Right cardiac atrium (tissue), 5 donors: ENCODE measurements at regions of chr5 and their contacts with region 1.

Region 1: DNA sequence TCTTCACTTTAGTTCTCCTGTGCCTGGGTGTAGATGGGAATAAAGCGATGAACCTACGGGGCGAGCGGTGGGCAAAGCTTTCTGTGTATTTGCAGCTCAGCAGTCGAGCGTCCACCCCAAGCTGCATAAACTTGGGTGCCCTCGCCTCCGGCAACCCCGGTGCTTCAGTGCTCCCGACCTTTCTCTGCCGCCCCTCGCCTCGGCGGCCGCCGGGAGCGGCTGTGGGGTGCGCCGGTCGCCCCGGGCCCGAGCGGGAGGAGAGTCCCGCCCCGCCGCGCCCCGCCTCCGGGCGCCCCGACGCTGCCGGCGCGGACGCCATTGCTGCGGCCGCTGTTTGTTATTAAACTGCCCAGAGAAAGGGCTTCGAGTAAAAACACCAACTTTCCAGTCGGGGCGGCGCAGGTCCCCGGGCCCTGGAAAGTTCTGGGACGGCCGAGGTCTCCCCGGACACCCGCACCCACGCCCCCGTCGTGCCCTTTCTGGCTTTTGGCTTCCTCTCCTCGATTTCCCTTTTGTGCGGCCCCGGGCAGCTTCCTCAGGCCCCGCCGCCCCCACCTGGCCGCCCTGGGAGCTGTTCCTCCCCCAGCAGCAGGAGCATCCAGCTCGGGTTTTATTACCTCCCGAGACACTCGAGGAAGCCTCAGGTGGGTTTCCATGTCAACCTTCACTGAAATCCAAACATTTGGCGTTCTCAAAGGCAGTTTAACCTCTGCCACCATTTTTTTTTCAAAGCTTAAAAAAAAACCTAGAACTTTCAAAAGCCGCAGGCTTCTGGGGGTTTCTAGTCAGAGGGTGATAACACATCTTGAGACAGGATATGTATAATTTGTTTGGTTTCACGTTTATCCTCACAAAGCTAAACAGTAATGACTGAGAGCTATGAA is 334.3 kb downstream of the CWC27 start:
- DNase-seq: peak; percentile 55 to 87 (median 86)
- ATAC-seq: peak; percentile 92 to 94
- H3K4me3 ChIP-seq: peak overlapping the region; percentile 79
- H3K27ac ChIP-seq: peak overlapping the region; percentile 68
- H3K4me1 ChIP-seq: peaks cover 2% of the 10 kb centered on the region
- H3K27me3 ChIP-seq: no peaks in the 10 kb centered on the region

Region 2: GRCh38 chr5:64958757-64959391 is 144.2 kb before region 1 on chr5:
- intact Hi-C with region 1: loop called in 2 of 4 experiments (anchors 10 kb)
- DNase-seq: no peak
- ATAC-seq: no peak
- H3K4me3 ChIP-seq: no peak overlapping the region
- H3K27ac ChIP-seq: no peak overlapping the region
- H3K4me1 ChIP-seq: no peaks in the 10 kb centered on the region
- H3K27me3 ChIP-seq: no peaks in the 10 kb centered on the region

Region 3: DNA sequence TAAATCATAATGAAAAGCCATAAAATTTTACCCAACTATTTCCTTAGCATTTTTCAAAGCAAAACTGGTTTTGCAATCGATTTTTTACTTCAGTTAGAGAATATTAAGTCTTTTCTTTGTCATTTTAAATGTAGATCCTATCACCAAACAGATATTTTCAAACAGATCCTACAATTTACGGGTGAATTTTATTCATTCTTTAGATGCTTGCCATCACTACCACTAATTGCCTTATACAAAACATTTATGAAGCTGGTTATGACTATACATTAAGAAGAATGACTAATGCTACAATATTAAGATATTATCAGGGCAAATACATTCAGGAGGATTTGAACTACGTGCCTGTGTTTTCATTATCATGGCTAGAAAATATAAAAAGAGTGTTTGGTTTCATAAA is 137.5 kb before region 1 on chr5:
- intact Hi-C with region 1: loop called in 1 of 4 experiments (anchors 10 kb)
- DNase-seq: no peak
- ATAC-seq: no peak
- H3K4me3 ChIP-seq: no peak overlapping the region
- H3K27ac ChIP-seq: no peak overlapping the region
- H3K4me1 ChIP-seq: no peaks in the 10 kb centered on the region
- H3K27me3 ChIP-seq: no peaks in the 10 kb centered on the region

Region 4: DNA sequence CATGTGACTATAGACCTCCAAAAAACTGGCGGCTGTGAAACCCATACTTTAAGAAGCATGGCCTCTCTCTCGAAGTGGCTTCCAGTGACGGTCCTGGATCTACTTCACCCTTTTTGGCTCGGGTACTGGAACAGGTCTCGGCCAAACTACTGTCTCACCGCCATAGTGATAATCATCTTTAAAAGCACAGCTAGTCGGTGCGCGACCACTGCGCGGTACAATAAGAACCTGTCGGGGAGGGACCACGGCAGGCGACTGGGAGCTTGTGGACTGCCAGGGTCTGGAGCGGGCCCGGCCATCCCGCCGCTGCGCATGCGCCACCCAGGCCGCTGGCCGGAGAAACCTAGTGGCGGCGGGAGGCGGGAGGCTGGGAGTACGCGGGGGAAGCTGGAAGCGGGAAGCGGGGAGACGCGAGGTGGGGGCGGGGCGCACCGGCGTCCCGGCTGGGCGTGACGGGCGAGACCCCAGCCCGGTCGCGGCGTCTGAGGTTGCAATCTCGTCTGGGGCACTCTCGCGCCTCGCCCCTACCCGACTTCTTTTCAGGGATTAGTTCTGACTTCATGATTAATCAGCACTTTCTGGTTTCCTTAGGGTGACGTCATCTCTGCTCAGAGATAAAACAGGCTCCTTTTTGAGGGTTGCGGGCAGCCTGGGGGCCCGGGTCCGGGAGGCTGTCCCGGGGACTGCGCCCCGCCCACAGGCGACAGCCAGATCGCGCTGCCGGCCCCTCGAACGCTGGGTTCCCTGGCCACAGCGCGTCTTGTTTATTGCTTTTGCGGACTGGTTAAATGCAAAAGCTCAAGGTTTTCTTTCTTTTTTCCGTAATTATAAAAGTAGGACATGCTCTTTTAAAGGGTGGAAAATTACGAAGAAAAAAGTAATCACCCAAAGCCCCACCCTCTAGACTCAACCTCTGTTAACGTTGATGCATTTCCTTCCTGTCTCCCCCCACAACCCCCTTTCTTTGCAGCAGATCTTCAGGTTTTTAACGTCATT is 67.6 kb before region 1 on chr5:
- intact Hi-C with region 1: loop called in 1 of 4 experiments (anchors 10 kb)
- DNase-seq: peak; percentile 93 to 96 (median 96)
- ATAC-seq: peak; percentile 94 to 97
- H3K4me3 ChIP-seq: peak overlapping the region; percentile 63
- H3K27ac ChIP-seq: peak overlapping the region; percentile 94
- H3K4me1 ChIP-seq: peaks cover 9% of the 10 kb centered on the region
- H3K27me3 ChIP-seq: no peaks in the 10 kb centered on the region

Region 5: GRCh38 chr5:65086234-65086890 is 16.7 kb before region 1 on chr5:
- intact Hi-C with region 1: no loop called
- DNase-seq: no peak
- ATAC-seq: no peak
- H3K4me3 ChIP-seq: no peak overlapping the region
- H3K27ac ChIP-seq: no peak overlapping the region
- H3K4me1 ChIP-seq: no peaks in the 10 kb centered on the region
- H3K27me3 ChIP-seq: no peaks in the 10 kb centered on the region